ENCODE measurements at regions of chr20 and their contacts with region 1.

Region 1: GRCh38 chr20:50070991-50071888 is 41.7 kb downstream of the UBE2V1 start:
- DNase-seq: peak; percentile 87
- H3K4me3 ChIP-seq: peak overlapping the region; percentile 43
- H3K27ac ChIP-seq: no peak overlapping the region
- H3K4me1 ChIP-seq: peaks cover 3% of the 10 kb centered on the region
- H3K27me3 ChIP-seq: no peaks in the 10 kb centered on the region
- CTCF ChIP-seq: peak; percentile 100

Region 2: GRCh38 chr20:49982346-49983122 is 88.7 kb before region 1 on chr20 and contains the start of gene SNAI1:
- CTCF ChIA-PET with region 1: interaction called, 57 read pairs
- POLR2A ChIA-PET with region 1: no interaction called
- intact Hi-C with region 1: loop called (anchors 1 kb)
- DNase-seq: peak; percentile 90
- H3K4me3 ChIP-seq: peak within 1 kb of the TSS; percentile 50
- H3K27ac ChIP-seq: peak within 1 kb of the TSS; percentile 49
- H3K4me1 ChIP-seq: peaks cover 37% of the 10 kb centered on the region
- H3K27me3 ChIP-seq: no peaks in the 10 kb centered on the region
- CTCF ChIP-seq: peak; percentile 59; the same call in 1 of the 2 replicates
- total RNA-seq, gene SNAI1: 4.1 and 4.4 TPM in 2 replicates

Region 3: GRCh38 chr20:50085452-50086365 is 14.5 kb after region 1 on chr20:
- CTCF ChIA-PET with region 1: interaction called, 12 read pairs
- POLR2A ChIA-PET with region 1: interaction called, 3 read pairs
- intact Hi-C with region 1: no loop called
- DNase-seq: peak; percentile 85
- H3K4me3 ChIP-seq: no peak overlapping the region
- H3K27ac ChIP-seq: peak overlapping the region; percentile 67
- H3K4me1 ChIP-seq: peaks cover 20% of the 10 kb centered on the region
- H3K27me3 ChIP-seq: no peaks in the 10 kb centered on the region
- CTCF ChIP-seq: peak; percentile 90

Region 4: DNA sequence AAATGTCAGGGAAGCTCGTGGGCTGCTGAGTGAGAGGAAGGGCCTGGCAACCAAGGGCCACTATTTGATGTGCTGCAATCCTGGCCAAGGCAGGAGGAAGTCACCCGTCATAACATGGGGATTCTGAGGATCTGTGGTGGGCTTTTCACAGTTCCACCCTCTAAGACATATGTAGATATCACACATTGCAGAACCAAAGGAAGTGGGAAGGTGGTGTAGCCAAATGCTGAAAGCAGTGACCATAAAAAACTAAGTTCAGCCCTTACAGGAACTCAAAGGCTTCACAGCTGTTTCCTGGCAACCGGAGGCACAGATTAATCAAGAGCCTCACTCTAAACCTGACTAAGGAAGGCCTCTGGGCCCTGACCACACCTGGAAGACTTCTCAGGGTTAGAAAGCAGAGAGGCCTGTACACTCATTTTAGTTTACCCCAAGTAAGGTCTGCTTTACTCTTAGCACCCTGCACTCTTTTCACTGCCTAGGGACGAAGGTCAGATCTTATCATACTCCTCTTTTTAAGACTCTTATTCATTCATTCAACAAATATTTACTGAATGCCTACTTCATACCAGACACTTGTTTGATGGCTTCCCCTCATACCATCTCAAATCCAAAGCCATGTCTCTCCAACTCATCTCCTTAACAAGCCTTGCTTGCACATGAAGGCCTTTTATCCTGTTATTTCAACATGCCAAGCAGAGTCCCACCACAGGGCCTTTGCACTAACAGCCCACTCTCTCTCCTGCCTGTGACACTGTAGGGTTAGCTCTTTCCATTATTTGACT is 39.1 kb after region 1 on chr20:
- CTCF ChIA-PET with region 1: interaction called, 11 read pairs
- POLR2A ChIA-PET with region 1: no interaction called
- intact Hi-C with region 1: no loop called
- DNase-seq: no peak
- H3K4me3 ChIP-seq: no peak overlapping the region
- H3K27ac ChIP-seq: no peak overlapping the region
- H3K4me1 ChIP-seq: peaks cover 37% of the 10 kb centered on the region
- H3K27me3 ChIP-seq: no peaks in the 10 kb centered on the region
- CTCF ChIP-seq: no peak

Region 5: GRCh38 chr20:50165684-50166554 is 94.7 kb after region 1 on chr20:
- CTCF ChIA-PET with region 1: interaction called, 4 read pairs
- POLR2A ChIA-PET with region 1: no interaction called
- intact Hi-C with region 1: loop called (anchors 5 kb)
- DNase-seq: peak; percentile 99
- H3K4me3 ChIP-seq: peak overlapping the region; percentile 41
- H3K27ac ChIP-seq: peak overlapping the region; percentile 89
- H3K4me1 ChIP-seq: peaks cover 22% of the 10 kb centered on the region
- H3K27me3 ChIP-seq: no peaks in the 10 kb centered on the region
- CTCF ChIP-seq: 0 out of 2 replicates have a peak, but pooled peaks have one; percentile 12

Region 6: DNA sequence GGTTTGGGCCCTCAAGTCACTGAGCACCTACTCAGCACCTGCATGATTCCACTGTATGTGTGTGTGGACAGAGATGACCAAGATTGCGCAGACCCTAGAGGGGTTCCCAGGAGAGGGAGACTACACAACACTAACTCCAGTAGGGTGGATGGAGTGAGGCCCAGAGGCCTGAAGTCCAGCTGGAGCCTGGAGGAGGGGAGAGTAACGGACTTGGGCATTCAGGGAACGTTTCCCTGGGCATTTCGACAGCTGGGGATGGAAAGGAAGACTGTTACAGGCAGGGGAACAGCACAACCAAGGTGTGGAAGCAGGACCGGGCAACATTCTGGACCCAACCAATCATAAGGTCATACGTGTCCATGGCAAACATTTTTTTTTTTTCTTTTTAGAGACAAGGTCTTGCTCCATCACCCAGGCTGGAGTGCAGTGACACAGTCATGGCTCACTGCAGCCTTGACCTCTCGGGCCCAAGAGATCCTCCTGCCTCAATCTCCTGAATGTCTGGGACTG is 108.3 kb after region 1 on chr20:
- CTCF ChIA-PET with region 1: interaction called, 19 read pairs
- POLR2A ChIA-PET with region 1: no interaction called
- intact Hi-C with region 1: no loop called
- DNase-seq: no peak
- H3K4me3 ChIP-seq: no peak overlapping the region
- H3K27ac ChIP-seq: no peak overlapping the region
- H3K4me1 ChIP-seq: peaks cover 6% of the 10 kb centered on the region
- H3K27me3 ChIP-seq: no peaks in the 10 kb centered on the region
- CTCF ChIP-seq: no peak; the same call in 1 of the 2 replicates